AG04449 (cell line): ENCODE measurements at regions of chr3 and their contacts with region 1.

Region 1: DNA sequence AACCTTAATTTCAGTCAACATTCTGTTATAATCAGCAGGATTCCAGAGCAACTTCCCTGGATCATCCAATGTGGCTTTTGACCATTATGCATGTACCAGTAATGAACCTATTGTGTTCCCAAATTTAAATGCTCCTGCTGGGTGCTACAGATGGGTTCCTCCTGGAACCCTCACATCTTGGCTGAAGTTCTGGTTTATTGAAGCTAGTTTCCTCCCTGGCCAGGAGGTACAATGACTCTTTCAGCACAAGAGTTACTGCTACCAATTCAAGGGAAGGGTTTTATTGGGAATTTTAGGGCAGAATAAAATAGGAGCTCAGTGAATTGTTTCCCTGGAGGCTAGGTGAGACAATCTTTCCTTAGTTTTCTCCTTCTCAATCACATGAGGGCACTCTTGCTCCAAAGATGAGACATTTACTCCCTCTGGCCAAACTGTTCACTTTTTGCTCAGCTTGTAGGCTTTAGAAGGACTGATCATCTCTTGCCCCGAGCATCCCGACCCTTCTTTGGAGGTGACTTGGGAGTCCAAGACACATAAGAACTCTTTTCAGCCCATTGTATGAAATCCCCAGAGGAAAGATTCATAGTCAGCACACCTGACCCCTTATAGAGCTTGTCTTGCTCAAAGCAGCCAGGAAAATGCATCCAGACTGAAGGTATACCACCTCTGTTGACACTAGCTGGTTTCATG is 8.8 kb upstream of the NPHP3 start:
- DNase-seq: no peak
- H3K4me3 ChIP-seq: no peak overlapping the region
- CTCF ChIP-seq: peak; percentile 27

Region 2: DNA sequence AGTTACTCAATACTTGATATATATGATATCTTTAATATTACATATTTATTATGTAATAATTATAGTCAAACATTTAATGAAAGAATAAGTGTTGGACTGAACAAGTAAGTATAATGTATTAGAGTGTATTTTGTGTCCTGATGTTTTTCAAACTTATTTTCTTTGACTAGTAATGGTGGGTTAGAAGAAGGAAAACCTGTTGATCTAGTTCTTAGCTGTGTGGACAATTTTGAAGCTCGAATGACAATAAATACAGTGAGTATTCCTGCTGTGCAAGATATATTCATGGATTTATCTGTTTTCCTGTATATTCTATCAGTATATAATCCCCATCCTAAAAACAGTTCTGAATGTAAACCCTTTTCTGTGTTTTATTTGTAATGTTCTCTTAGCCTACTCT is 60.2 kb before region 1 on chr3:
- CTCF ChIA-PET with region 1: no interaction called
- POLR2A ChIA-PET with region 1: no interaction called
- DNase-seq: no peak
- H3K4me3 ChIP-seq: no peak overlapping the region
- CTCF ChIP-seq: no peak

Region 3: DNA sequence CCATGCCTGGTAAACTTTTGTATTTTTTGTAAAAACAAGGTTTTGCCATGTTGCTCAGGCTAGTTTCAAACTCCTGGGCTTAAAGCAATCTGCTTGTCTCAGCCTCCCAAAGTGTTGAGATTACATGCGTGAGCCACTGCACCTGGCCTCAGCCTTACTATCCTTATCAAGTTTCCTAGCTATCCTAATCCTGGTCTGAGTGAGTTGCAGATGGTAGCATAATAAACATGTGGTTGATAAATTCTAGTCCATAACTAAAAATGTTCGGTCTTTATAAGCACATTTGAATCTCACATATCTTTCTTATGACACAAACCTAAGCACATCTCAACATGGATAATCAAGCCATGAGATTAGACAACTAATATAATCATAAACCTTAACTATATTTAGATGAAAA is 27.3 kb before region 1 on chr3:
- CTCF ChIA-PET with region 1: no interaction called
- POLR2A ChIA-PET with region 1: no interaction called
- DNase-seq: no peak
- H3K4me3 ChIP-seq: no peak overlapping the region
- CTCF ChIP-seq: no peak

Region 4: GRCh38 chr3:133384331-133385027 is 653.4 kb after region 1 on chr3:
- CTCF ChIA-PET with region 1: interaction called, 160 read pairs
- POLR2A ChIA-PET with region 1: no interaction called
- DNase-seq: no peak
- H3K4me3 ChIP-seq: no peak overlapping the region
- CTCF ChIP-seq: peak; percentile 89

Region 5: GRCh38 chr3:133419151-133419909 is 688.3 kb after region 1 on chr3:
- CTCF ChIA-PET with region 1: interaction called, 67 read pairs
- POLR2A ChIA-PET with region 1: no interaction called
- DNase-seq: no peak
- H3K4me3 ChIP-seq: no peak overlapping the region
- CTCF ChIP-seq: no peak